Activated CD4-positive, alpha-beta memory T cell treated with anti-CD3 and anti-CD28 coated beads for 36 hours (primary cell): ENCODE measurements at regions of chr12 and their contacts with region 1.

Region 1: DNA sequence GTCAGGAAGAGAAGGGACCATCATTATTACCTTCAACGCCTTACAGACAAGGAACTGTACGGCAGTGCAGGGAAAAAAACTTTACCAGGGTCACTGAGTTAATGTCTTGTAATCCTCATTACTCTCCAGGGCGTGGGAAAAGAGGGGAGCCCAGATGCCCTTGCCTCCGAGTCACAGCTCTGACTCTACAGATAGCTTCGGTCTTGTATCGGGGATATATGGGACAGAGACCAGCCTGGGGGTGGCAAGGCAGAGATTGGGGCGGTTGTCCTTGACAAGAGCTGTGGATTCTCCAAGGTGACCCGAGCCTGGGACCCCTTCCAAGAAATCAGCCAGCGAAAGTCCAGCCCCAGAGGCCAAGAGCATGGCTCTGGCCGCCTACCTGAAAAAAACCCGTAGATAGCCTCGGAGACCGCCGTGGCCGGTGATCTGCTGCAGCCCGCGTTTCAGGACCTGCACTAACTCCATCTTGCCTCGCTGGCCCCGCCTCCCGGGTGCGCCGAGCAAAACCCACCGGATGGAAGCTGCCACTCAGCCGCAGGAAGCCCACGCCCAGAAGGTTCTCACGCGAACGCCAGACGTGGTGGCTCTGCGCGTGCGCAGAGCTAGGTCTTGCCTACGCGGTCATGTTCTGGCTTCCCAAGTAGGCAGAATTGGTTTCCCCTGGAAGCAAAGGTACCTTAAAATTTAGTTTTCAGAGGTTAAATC is at the start of gene NDUFA12:
- DNase-seq: peak; percentile 97
- H3K4me3 Mint-ChIP-seq: peak within 1 kb of the TSS; percentile 91
- H3K27ac Mint-ChIP-seq: peak within 1 kb of the TSS; percentile 87
- H3K4me1 Mint-ChIP-seq: peaks cover 40% of the 10 kb centered on the region
- H3K27me3 Mint-ChIP-seq: no peaks in the 10 kb centered on the region
- total RNA-seq, gene NDUFA12: 150 to 156 TPM

Region 2: GRCh38 chr12:94615284-94616181 is 387.8 kb before region 1 on chr12:
- CTCF ChIA-PET with region 1: no interaction called
- POLR2A ChIA-PET with region 1: no interaction called
- intact Hi-C with region 1: loop called (anchors 5 kb)
- DNase-seq: no peak
- H3K4me3 Mint-ChIP-seq: no peak overlapping the region
- H3K27ac Mint-ChIP-seq: no peak overlapping the region
- H3K4me1 Mint-ChIP-seq: peaks cover 6% of the 10 kb centered on the region
- H3K27me3 Mint-ChIP-seq: peaks cover 4% of the 10 kb centered on the region

Region 3: GRCh38 chr12:94941440-94941862 is 61.9 kb before region 1 on chr12:
- CTCF ChIA-PET with region 1: interaction called, 3 read pairs
- POLR2A ChIA-PET with region 1: no interaction called
- intact Hi-C with region 1: loop called (anchors 2 kb)
- DNase-seq: peak; percentile 82
- H3K4me3 Mint-ChIP-seq: no peak overlapping the region
- H3K27ac Mint-ChIP-seq: peak overlapping the region; percentile 63
- H3K4me1 Mint-ChIP-seq: peaks cover 39% of the 10 kb centered on the region
- H3K27me3 Mint-ChIP-seq: peaks cover 2% of the 10 kb centered on the region

Region 4: GRCh38 chr12:94987801-94988200 is 15.6 kb before region 1 on chr12:
- CTCF ChIA-PET with region 1: no interaction called
- POLR2A ChIA-PET with region 1: interaction called, 19 read pairs
- intact Hi-C with region 1: loop called (anchors 1 kb)
- DNase-seq: no peak
- H3K4me3 Mint-ChIP-seq: no peak overlapping the region
- H3K27ac Mint-ChIP-seq: peak overlapping the region; percentile 28
- H3K4me1 Mint-ChIP-seq: peaks cover 47% of the 10 kb centered on the region
- H3K27me3 Mint-ChIP-seq: no peaks in the 10 kb centered on the region

Region 5: DNA sequence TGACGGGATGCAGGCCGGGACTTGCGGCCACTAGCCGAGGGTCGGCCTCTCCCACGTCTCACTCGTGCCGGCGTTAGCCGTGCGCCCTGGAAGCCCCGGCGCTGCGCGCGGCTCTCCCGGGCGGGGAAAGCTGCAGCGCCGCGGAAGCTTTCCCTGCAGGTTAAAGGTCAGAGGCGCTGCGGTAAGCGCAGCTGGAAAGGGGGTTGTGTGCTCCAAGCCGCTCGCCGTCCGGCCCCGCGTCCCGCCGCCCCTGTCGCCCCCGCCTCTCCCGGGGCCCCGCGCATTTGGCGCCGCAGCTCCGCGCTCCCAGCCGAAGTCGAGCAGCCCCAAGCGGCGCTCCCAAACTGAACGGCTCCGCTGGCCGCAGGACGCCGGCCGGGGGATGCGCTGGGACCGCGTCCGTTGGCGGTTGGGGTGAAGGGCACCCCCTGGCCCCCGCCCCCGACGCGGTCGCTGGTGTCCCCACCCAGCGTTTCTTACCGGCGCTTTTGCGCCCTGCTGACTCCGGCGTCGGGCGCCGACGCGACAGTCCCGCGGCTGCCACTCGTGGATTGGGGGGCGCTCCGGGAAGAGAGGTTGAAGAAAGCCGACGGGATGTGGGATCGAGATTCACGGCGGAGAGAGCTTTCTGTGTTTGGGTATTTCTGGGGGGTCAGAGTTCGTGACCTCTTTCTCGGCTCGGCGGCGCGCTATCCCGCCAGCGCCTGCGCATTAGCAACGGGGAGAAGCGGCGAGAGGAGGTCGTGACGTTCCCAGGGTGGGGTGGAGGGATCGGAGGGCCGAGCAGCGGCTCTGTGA is 69.7 kb after region 1 on chr12 and contains the start of gene NR2C1:
- CTCF ChIA-PET with region 1: interaction called, 6 read pairs
- POLR2A ChIA-PET with region 1: interaction called, 4 read pairs
- intact Hi-C with region 1: loop called (anchors 1 kb)
- DNase-seq: peak; percentile 96
- H3K4me3 Mint-ChIP-seq: peak within 1 kb of the TSS; percentile 89
- H3K27ac Mint-ChIP-seq: peak within 1 kb of the TSS; percentile 89
- H3K4me1 Mint-ChIP-seq: peaks cover 20% of the 10 kb centered on the region
- H3K27me3 Mint-ChIP-seq: no peaks in the 10 kb centered on the region
- total RNA-seq, gene NR2C1: 25.5 to 27.1 TPM

Region 6: GRCh38 chr12:95130096-95130495 is 126.7 kb after region 1 on chr12:
- CTCF ChIA-PET with region 1: no interaction called
- POLR2A ChIA-PET with region 1: no interaction called
- intact Hi-C with region 1: no loop called
- DNase-seq: no peak
- H3K4me3 Mint-ChIP-seq: no peak overlapping the region
- H3K27ac Mint-ChIP-seq: no peak overlapping the region
- H3K4me1 Mint-ChIP-seq: no peaks in the 10 kb centered on the region
- H3K27me3 Mint-ChIP-seq: no peaks in the 10 kb centered on the region

Region 7: GRCh38 chr12:96035278-96036236 is 1032.2 kb after region 1 on chr12 and contains the start of gene LTA4H:
- CTCF ChIA-PET with region 1: no interaction called
- POLR2A ChIA-PET with region 1: no interaction called
- intact Hi-C with region 1: loop called (anchors 5 kb)
- DNase-seq: peak; percentile 97
- H3K4me3 Mint-ChIP-seq: no peak within 1 kb of the TSS
- H3K27ac Mint-ChIP-seq: no peak within 1 kb of the TSS
- H3K4me1 Mint-ChIP-seq: peaks cover 13% of the 10 kb centered on the region
- H3K27me3 Mint-ChIP-seq: no peaks in the 10 kb centered on the region
- total RNA-seq, gene LTA4H: 106 to 110 TPM